ENCODE measurements at regions of chr9 and their contacts with region 1.

Region 1: GRCh38 chr9:87725900-87726709 is at the start of gene CTSL:
- DNase-seq: peak; percentile 94 to 97 (median 95)
- ATAC-seq: peak; percentile 97 to 98 (median 98)
- H3K4me3 ChIP-seq: peak within 1 kb of the TSS; percentile 54 to 86 (median 74)
- H3K27ac ChIP-seq: peak within 1 kb of the TSS; percentile 85 to 100 (median 96)
- H3K4me1 ChIP-seq: peaks cover 0 to 76% (median 20%) of the 10 kb centered on the region in 12 donors
- H3K27me3 ChIP-seq: no peaks in the 10 kb centered on the region
- CTCF ChIP-seq: peak in 9 of 12 donors; percentile 8 to 45 (median 19)
- POLR2A ChIP-seq: peak; percentile 30 to 94
- total RNA-seq, gene CTSL: 95.3 to 382 (median 130) TPM

Region 2: GRCh38 chr9:87792831-87793288 is 66.8 kb after region 1 on chr9:
- intact Hi-C with region 1: loop called in 1 of 10 experiments (anchors 10 kb)
- DNase-seq: peak; percentile 71 to 84 (median 75)
- ATAC-seq: peak; percentile 89 to 99 (median 98)
- H3K4me3 ChIP-seq: peak overlapping the region in 1 of 12 donors; percentile 16
- H3K27ac ChIP-seq: peak overlapping the region in 10 of 12 donors; percentile 8 to 93 (median 53)
- H3K4me1 ChIP-seq: peaks cover 0 to 40% (median 0%) of the 10 kb centered on the region in 12 donors
- H3K27me3 ChIP-seq: no peaks in the 10 kb centered on the region
- CTCF ChIP-seq: peak in 6 of 12 donors; percentile 15 to 39 (median 26)
- POLR2A ChIP-seq: no peak

Measured in heart left ventricle (tissue), 16 donors.